ENCODE measurements at regions of chr4 and their contacts with region 1.

Region 1: GRCh38 chr4:30314001-30314400 is 406.2 kb upstream of the PCDH7 start:
- DNase-seq: no peak
- ATAC-seq: no peak
- H3K4me3 Mint-ChIP-seq: no peak overlapping the region
- H3K27ac Mint-ChIP-seq: no peak overlapping the region
- H3K4me1 Mint-ChIP-seq: no peaks in the 10 kb centered on the region
- H3K27me3 Mint-ChIP-seq: no peaks in the 10 kb centered on the region

Region 2: DNA sequence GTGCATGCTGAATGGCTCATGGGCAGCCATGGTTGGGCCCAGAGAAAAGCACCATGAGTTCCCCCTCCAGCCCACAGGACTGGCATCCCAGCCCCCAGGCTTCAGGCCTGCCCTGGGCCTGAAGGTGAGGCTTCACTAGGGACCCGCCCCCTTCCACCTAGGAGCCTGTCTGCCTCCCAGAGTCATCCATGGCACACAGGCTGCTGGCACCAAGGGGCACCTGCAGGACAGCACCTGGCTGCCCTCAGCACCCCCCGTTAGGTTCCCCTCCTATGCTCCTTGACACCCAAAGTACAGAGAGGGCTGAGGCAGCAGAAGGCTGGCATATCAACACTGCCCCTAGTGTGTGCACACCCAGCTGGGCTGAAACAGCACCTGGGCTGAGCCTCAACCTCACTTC is 160.6 kb before region 1 on chr4:
- CTCF ChIA-PET with region 1: no interaction called
- POLR2A ChIA-PET with region 1: no interaction called
- intact Hi-C with region 1: no loop called
- DNase-seq: no peak
- ATAC-seq: no peak
- H3K4me3 Mint-ChIP-seq: no peak overlapping the region
- H3K27ac Mint-ChIP-seq: no peak overlapping the region
- H3K4me1 Mint-ChIP-seq: no peaks in the 10 kb centered on the region
- H3K27me3 Mint-ChIP-seq: no peaks in the 10 kb centered on the region

Region 3: DNA sequence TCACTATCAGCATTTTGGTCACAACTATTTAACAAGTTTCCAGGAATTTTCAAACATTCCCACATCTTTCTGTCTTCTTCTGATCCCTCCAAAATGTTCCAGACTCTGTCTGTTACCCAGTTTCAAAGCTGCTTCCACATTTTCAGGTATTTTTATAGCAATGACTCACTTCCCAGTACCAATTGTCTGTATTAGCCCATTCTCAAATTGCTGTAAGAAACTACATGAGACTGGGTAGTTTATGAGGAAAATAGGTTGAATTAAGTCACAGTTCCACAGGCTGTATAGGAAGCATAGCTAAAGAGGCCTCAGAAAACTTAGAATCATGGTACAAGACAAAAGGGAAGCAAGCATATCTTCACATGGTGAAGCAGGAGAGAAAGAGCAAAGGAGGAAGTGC is 68.9 kb before region 1 on chr4:
- CTCF ChIA-PET with region 1: no interaction called
- POLR2A ChIA-PET with region 1: no interaction called
- intact Hi-C with region 1: no loop called
- DNase-seq: no peak
- ATAC-seq: no peak
- H3K4me3 Mint-ChIP-seq: no peak overlapping the region
- H3K27ac Mint-ChIP-seq: no peak overlapping the region
- H3K4me1 Mint-ChIP-seq: no peaks in the 10 kb centered on the region
- H3K27me3 Mint-ChIP-seq: no peaks in the 10 kb centered on the region

Region 4: GRCh38 chr4:30256080-30256832 is 57.7 kb before region 1 on chr4:
- CTCF ChIA-PET with region 1: no interaction called
- POLR2A ChIA-PET with region 1: no interaction called
- intact Hi-C with region 1: loop called in 1 of 2 experiments (anchors 5 kb)
- DNase-seq: no peak
- ATAC-seq: no peak
- H3K4me3 Mint-ChIP-seq: no peak overlapping the region
- H3K27ac Mint-ChIP-seq: no peak overlapping the region
- H3K4me1 Mint-ChIP-seq: no peaks in the 10 kb centered on the region
- H3K27me3 Mint-ChIP-seq: no peaks in the 10 kb centered on the region